A673 (cell line): ENCODE measurements at regions of chr4 and their contacts with region 1.

Region 1: DNA sequence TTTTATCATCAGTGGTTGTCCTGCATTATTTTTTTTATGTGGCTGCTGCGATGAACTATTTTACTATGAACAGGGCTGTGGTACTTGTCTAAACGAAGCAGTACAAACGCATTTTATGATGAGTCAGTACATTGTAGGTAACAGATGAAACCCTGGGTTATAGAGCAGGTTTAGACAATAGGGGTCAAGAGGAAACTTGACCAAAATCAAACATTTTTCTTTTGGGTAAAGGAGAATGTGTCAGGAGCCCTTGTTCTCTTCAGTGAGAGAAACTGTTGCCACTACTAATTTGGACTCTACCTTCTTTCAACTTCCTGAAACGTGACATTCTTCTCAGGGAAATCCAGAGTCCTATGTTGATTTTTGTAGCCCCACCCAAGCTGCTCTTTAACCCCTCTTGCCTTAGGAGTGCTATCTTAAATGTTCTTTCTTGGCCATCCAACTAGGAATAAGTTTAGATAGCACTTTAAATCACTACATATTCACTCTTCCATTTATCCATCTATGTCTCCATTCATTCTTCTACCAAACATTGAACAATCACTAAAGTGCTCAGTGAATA is 415.8 kb upstream of the NR3C2 start:
- DNase-seq: no peak
- H3K4me3 ChIP-seq: no peak overlapping the region
- H3K27ac ChIP-seq: no peak overlapping the region
- H3K4me1 ChIP-seq: no peaks in the 10 kb centered on the region
- H3K27me3 ChIP-seq: no peaks in the 10 kb centered on the region
- CTCF ChIP-seq: no peak

Region 2: GRCh38 chr4:148573286-148573685 is 284.8 kb before region 1 on chr4:
- CTCF ChIA-PET with region 1: no interaction called
- POLR2A ChIA-PET with region 1: interaction called, 15 read pairs
- intact Hi-C with region 1: no loop called
- DNase-seq: no peak
- H3K4me3 ChIP-seq: no peak overlapping the region
- H3K27ac ChIP-seq: no peak overlapping the region
- H3K4me1 ChIP-seq: no peaks in the 10 kb centered on the region
- H3K27me3 ChIP-seq: no peaks in the 10 kb centered on the region
- CTCF ChIP-seq: no peak